PC-9 (cell line): ENCODE measurements at regions of chr1 and their contacts with region 1.

Region 1: DNA sequence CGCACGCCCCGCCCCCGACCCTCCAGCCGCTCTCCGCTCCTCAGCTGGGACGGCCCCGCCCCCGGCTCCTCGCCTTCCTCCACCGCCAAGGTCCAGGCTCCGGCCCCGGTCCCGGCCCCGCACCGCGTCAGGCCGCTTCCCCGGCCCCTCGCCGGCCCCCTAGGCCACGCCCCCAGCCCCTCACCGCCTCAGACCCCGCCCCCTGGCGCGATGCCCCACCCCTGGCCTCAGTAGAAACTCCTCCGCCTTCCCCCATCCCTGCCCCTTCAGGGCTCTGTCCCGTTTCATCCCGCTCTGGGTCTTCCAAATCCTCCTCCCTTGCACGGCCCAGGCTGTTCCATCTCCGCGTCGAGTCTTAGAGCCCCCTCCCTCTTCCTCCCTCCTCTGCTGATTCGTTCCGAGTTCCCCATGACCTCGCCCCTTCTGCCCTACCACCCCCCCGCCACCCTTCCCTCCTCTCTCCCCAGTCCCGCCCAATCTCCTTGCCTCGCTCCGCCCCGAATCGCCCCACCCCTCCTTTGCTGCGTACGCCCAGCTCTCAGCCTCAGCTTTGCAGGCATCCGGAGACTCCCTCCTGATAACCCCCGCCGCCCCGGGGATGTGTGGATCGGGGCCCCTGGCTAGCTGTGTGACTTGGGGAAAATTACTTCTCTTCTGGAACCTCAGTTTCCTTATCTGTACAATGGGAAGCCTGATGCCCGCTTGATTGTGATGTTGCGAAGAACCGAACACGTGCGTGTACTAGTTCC is 448 bp upstream of the ASAP3 start:
- DNase-seq: peak; percentile 63 to 90
- H3K4me3 ChIP-seq: peak overlapping the region; percentile 61; the same call in 1 of the 2 replicates
- H3K27ac ChIP-seq: no peak overlapping the region
- H3K4me1 ChIP-seq: peaks cover 10% of the 10 kb centered on the region
- H3K27me3 ChIP-seq: no peaks in the 10 kb centered on the region
- CTCF ChIP-seq: no peak

Region 2: DNA sequence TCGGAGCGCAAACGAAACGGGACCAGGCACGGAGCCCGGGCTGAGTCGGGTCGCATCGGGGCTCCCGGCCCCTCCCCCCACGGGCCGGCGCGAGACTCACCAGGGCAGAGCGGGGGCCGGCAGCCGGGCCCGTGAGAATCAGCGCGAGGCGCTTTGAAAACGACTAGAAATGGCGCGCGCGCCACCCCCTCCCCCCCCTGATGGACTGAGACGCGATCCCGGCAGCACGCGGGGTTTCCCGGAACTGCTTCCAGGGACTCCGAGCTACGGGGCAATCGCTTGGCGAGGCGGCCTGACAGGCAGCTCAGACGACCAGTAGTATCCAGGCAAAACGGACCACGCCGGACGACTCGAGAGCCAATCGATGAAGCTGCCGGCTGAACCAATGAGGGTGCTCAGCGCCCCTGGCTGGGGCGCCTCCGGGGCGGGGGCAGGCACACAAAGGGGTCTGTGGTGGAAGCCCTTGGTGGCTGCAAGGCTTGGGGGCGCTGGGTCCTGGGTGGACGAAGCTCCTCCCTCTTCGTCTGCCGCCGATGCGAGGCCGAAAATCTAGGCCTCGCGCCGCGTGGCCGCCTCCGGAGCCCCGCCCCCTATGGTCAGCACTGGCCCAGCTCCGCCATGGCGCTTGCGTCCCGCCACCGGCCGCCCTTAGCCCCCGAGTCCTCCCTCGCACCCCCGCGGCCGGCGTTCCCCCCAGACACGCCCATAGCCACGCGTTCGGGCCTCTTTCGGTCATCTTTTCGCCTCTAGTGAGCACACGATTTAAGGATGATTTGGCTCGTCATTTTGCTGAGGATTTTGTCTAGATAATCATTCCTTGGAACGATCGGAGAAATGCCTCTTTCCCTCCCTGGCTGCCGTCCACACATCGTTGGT is 140.1 kb before region 1 on chr1 and contains the start of gene HNRNPR:
- CTCF ChIA-PET with region 1: interaction called, 19 read pairs
- POLR2A ChIA-PET with region 1: no interaction called
- intact Hi-C with region 1: loop called (anchors 2 kb)
- DNase-seq: peak; percentile 96 to 99
- H3K4me3 ChIP-seq: peak within 1 kb of the TSS; percentile 68
- H3K27ac ChIP-seq: peak within 1 kb of the TSS; percentile 81
- H3K4me1 ChIP-seq: peaks cover 39% of the 10 kb centered on the region
- H3K27me3 ChIP-seq: no peaks in the 10 kb centered on the region
- CTCF ChIP-seq: no peak
- total RNA-seq, gene HNRNPR: 149 and 198 TPM in 2 replicates

Region 3: GRCh38 chr1:23452011-23452411 is 32.4 kb before region 1 on chr1:
- CTCF ChIA-PET with region 1: no interaction called
- POLR2A ChIA-PET with region 1: interaction called, 14 read pairs
- intact Hi-C with region 1: no loop called
- DNase-seq: peak; percentile 91 to 96
- H3K4me3 ChIP-seq: no peak overlapping the region
- H3K27ac ChIP-seq: no peak overlapping the region
- H3K4me1 ChIP-seq: peaks cover 33% of the 10 kb centered on the region
- H3K27me3 ChIP-seq: no peaks in the 10 kb centered on the region
- CTCF ChIP-seq: no peak

Region 4: DNA sequence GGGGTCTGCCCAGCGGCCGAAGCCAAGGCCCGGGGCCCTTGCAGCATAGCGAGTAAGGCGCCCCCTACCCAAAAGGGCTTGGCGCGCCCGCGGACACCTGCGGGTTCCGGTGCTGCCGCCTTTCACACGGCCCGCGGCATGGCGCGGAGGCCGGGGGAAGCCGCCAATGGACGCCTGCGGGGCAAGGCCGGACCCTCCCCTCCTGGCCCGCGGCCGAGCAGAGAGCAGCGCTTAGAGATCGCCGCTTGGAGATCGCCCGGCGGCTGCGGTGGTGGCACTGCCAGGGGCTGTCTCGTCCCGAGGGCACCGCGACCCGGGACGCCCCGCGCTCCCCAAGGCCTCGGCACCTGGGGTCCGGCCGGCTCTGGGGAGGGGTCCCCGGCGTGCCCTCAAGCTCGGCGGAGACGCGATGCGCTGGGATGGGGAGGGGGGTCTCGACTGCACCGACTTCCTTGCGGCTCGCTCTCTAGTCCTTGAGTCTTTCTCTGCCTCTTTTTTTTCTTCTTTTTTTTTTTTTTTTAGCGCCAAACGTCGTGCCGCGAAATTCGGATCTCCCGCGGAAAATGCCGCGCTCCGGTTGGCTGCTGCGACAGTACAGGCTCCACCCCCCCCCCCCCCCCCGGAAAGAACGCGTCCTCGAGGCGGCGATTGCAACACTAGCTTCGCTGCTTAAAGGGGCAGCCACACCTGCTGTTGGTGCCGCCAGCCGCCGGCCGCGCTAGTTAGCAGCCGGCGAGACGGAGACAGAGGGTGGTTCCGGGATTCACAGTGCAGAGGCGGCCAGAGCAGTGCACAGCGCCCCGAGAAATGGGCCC is 46.5 kb after region 1 on chr1 and contains the start of gene E2F2:
- CTCF ChIA-PET with region 1: no interaction called
- POLR2A ChIA-PET with region 1: interaction called, 28 read pairs
- intact Hi-C with region 1: loop called (anchors 5 kb)
- DNase-seq: peak; percentile 70 to 73
- H3K4me3 ChIP-seq: peak within 1 kb of the TSS; percentile 65
- H3K27ac ChIP-seq: peak within 1 kb of the TSS; percentile 12; the same call in 1 of the 2 replicates
- H3K4me1 ChIP-seq: peaks cover 70% of the 10 kb centered on the region
- H3K27me3 ChIP-seq: no peaks in the 10 kb centered on the region
- CTCF ChIP-seq: no peak; the same call in 1 of the 2 replicates
- total RNA-seq, gene E2F2: 7.6 and 9.0 TPM in 2 replicates